ENCODE measurements at regions of chr1 and their contacts with region 1.

Region 1: GRCh38 chr1:165073185-165074007 is 283.1 kb downstream of the LMX1A start:
- DNase-seq: no peak
- H3K4me3 ChIP-seq: no peak overlapping the region
- CTCF ChIP-seq: peak; percentile 62

Region 2: GRCh38 chr1:163357378-163357777 is 1716.0 kb before region 1 on chr1:
- CTCF ChIA-PET with region 1: interaction called, 14 read pairs
- POLR2A ChIA-PET with region 1: no interaction called
- DNase-seq: no peak
- H3K4me3 ChIP-seq: no peak overlapping the region
- CTCF ChIP-seq: no peak

Region 3: DNA sequence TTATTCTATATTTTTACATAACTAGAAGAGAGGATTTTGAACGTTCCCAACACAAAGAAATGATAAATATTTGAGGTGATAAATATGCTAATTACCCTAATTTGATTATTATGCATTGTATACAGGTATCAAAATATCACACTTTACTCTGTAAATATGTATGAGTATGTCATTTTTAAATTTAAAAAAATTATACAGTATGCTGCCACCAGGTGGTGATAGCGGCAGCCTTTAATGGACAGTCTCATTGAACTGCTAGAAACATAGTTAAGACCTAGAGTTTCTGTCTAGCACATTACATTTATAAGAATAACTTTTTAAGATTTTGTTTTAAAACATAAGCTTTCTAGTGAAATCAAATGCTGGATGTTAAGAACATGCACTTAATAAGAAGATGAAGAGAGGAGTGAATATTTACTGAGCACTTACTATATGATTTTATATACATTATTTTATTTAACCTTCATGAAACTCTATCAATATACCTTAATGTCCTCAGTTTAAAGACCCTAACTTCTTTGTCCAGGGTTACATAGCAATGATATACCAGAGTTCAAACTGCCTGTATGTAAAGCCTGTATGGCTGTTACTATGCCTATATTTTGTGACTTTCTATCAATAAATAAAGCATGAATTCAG is 1544.6 kb before region 1 on chr1:
- CTCF ChIA-PET with region 1: interaction called, 29 read pairs
- POLR2A ChIA-PET with region 1: no interaction called
- DNase-seq: no peak
- H3K4me3 ChIP-seq: no peak overlapping the region
- CTCF ChIP-seq: peak; percentile 18

Region 4: DNA sequence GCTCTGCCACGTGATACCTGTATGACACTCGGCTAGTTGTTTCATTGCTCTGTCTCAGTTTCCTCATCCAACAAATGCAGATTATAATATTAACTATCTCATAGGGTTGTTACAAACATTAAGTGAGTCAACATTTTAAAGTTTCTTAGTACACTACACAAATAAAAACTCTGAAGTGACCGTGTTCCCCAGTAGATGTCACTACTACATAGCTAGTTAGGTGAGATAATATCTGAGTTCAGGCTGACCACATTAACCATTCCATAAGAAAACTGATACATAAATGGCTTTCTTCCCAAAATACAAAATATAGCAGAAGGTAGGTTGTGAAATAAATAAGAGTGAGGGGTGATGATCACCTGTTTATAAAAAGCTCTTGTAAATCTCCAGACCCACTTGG is 1537.6 kb before region 1 on chr1:
- CTCF ChIA-PET with region 1: interaction called, 29 read pairs
- POLR2A ChIA-PET with region 1: no interaction called
- DNase-seq: no peak
- H3K4me3 ChIP-seq: no peak overlapping the region
- CTCF ChIP-seq: peak; percentile 2

Region 5: GRCh38 chr1:165207853-165208515 is 134.6 kb after region 1 on chr1:
- CTCF ChIA-PET with region 1: no interaction called
- POLR2A ChIA-PET with region 1: no interaction called
- DNase-seq: no peak
- H3K4me3 ChIP-seq: no peak overlapping the region
- CTCF ChIP-seq: no peak

Measured in AG04449 (cell line).